Endothelial cell of umbilical vein (primary cell): ENCODE measurements at regions of chr6 and their contacts with region 1.

Region 1: GRCh38 chr6:163413345-163414116 is 987 bp upstream of the QKI start:
- DNase-seq: peak; percentile 93
- H3K4me3 ChIP-seq: peak overlapping the region; percentile 64 to 92 (median 70)
- H3K27ac ChIP-seq: peak overlapping the region; percentile 85
- H3K4me1 ChIP-seq: peaks cover 20% of the 10 kb centered on the region
- H3K27me3 ChIP-seq: no peaks in the 10 kb centered on the region
- CTCF ChIP-seq: no peak
- POLR2A ChIP-seq: peak; percentile 1

Region 2: GRCh38 chr6:163180874-163181541 is 232.5 kb before region 1 on chr6:
- CTCF ChIA-PET with region 1: interaction called, 5 read pairs
- POLR2A ChIA-PET with region 1: no interaction called
- dilution Hi-C with region 1: no loop called
- intact Hi-C with region 1: loop called (anchors 1 kb)
- DNase-seq: peak; percentile 71
- H3K4me3 ChIP-seq: no peak overlapping the region
- H3K27ac ChIP-seq: no peak overlapping the region
- H3K4me1 ChIP-seq: no peaks in the 10 kb centered on the region
- H3K27me3 ChIP-seq: peaks cover 4 to 9% of the 10 kb centered on the region in 2 experiments
- CTCF ChIP-seq: peak; percentile 93 to 97
- POLR2A ChIP-seq: no peak

Region 3: GRCh38 chr6:163338671-163339405 is 74.7 kb before region 1 on chr6:
- CTCF ChIA-PET with region 1: interaction called, 10 read pairs
- POLR2A ChIA-PET with region 1: interaction called, 6 read pairs
- dilution Hi-C with region 1: no loop called
- intact Hi-C with region 1: loop called (anchors 1 kb)
- DNase-seq: peak; percentile 57
- H3K4me3 ChIP-seq: no peak overlapping the region
- H3K27ac ChIP-seq: no peak overlapping the region
- H3K4me1 ChIP-seq: peaks cover 23% of the 10 kb centered on the region
- H3K27me3 ChIP-seq: no peaks in the 10 kb centered on the region
- CTCF ChIP-seq: no peak
- POLR2A ChIP-seq: no peak

Region 4: GRCh38 chr6:163393935-163394334 is 19.6 kb before region 1 on chr6:
- CTCF ChIA-PET with region 1: interaction called, 4 read pairs
- POLR2A ChIA-PET with region 1: no interaction called
- dilution Hi-C with region 1: no loop called
- intact Hi-C with region 1: loop called (anchors 2 kb)
- DNase-seq: peak; percentile 29
- H3K4me3 ChIP-seq: no peak overlapping the region
- H3K27ac ChIP-seq: no peak overlapping the region
- H3K4me1 ChIP-seq: peaks cover 20% of the 10 kb centered on the region
- H3K27me3 ChIP-seq: no peaks in the 10 kb centered on the region
- CTCF ChIP-seq: no peak
- POLR2A ChIP-seq: no peak

Region 5: DNA sequence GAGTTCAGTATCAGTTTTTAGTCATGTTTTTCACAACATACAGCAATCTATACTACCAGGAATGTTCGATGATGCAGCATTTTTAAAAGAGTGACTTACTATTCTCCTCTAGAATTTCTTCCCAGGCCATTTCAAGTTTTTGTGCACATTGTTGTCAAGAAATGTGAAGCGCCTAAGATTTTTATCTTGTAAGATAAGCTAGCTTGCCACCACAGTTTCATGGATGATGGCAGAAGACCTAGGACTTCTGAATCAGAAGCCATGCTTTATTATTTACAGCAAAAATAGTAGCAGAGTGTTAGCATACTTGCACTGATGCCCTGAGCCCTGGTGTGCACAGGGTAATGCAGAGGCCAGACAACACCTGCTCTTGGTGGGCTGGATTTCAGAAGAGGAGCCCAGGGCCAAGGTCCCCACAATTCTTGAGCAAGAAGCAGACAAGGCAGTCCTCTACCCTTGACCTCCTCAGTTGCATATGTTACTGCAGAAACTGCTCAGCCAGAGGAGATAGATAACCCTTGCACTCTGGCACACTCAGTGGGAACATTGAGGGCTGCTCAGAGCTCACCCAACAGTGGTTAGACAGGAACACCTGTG is 100.1 kb after region 1 on chr6:
- CTCF ChIA-PET with region 1: no interaction called
- POLR2A ChIA-PET with region 1: no interaction called
- dilution Hi-C with region 1: no loop called
- intact Hi-C with region 1: no loop called
- DNase-seq: no peak
- H3K4me3 ChIP-seq: no peak overlapping the region
- H3K27ac ChIP-seq: no peak overlapping the region
- H3K4me1 ChIP-seq: no peaks in the 10 kb centered on the region
- H3K27me3 ChIP-seq: no peaks in the 10 kb centered on the region
- CTCF ChIP-seq: no peak
- POLR2A ChIP-seq: no peak

Region 6: DNA sequence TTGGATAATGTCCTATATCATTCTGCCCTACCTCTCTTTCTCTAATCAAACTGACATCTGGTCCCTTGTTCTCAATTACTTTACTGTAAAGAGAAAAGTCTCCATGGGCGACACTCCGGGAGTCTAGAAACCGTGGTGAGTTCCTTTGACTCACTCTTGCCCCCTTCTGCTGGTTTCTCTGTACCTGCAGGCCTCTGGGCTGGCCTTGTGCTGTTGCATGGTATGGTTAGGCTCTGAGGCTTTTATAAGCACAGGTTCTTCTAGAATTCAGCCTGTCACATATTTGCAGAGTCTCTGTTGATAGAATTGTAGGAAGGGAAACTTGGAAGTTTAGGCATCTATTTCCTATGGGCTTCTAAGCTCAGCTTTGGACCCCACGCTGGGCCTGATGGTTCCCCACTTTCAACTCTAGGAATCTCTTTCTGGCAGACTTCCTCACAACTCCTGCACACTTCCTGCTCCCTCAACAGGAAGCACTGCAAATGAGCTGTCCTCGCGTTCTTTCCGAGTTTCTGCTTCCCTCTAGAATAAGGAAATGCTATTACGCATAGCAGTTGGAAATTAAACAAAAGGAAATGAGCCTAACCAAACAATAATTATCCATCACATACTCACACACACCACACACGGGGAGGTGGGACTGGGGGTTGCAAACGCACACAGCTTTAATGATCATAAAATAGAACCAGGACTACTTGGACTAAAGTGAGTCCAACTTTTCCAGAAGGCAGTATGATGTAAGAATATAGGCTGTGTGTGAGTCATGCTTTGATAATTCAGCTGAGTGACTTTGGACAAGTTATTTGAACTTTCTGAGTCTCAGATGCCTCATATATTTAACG is 684.2 kb after region 1 on chr6:
- CTCF ChIA-PET with region 1: interaction called, 5 read pairs
- POLR2A ChIA-PET with region 1: no interaction called
- dilution Hi-C with region 1: no loop called
- intact Hi-C with region 1: loop called (anchors 1 kb)
- DNase-seq: peak; percentile 94
- H3K4me3 ChIP-seq: no peak overlapping the region
- H3K27ac ChIP-seq: peak overlapping the region; percentile 59
- H3K4me1 ChIP-seq: peaks cover 23% of the 10 kb centered on the region
- H3K27me3 ChIP-seq: no peaks in the 10 kb centered on the region
- CTCF ChIP-seq: peak; percentile 22 to 51
- POLR2A ChIP-seq: no peak

Region 7: DNA sequence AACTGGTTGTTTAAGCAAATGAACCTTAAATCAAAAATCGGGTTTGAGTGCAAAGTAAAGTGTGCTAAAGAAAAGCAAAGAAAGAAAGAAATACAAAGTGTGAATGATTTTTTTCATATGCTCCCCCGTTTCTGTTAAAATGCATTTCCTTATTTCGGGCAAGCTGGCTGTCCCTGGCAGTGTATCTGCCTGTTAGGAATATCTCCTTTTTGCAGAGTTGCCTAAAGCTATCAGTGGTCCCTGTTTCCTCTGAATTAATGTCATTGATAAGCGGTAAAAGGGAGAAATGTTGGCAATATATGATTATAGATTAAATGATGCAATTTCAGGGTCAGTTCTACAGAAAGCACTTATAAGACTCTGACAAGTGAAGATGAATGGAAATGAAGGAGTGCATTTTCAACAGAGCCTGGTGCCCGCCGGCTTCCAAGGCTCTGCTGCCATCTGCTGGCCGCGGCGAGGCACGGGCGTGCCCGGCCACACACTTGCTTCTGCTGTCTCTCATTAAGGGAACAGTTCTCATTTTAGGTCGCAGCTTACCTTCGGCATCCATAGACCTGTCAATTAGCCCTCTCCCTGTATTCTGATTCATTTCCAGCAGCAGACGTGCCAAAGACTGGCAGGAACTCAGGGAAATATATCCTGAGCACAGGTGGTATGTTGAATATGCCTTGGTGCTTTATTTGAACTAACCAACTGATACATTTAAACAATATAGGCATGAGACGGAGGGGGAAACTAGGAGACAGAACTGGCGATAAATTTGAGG is 1513.9 kb after region 1 on chr6:
- CTCF ChIA-PET with region 1: no interaction called
- POLR2A ChIA-PET with region 1: no interaction called
- dilution Hi-C with region 1: no loop called
- intact Hi-C with region 1: loop called (anchors 1 kb)
- DNase-seq: peak; percentile 53
- H3K4me3 ChIP-seq: no peak overlapping the region
- H3K27ac ChIP-seq: no peak overlapping the region
- H3K4me1 ChIP-seq: no peaks in the 10 kb centered on the region
- H3K27me3 ChIP-seq: no peaks in the 10 kb centered on the region
- CTCF ChIP-seq: peak; percentile 87 to 95
- POLR2A ChIP-seq: no peak